Activated CD4-positive, alpha-beta memory T cell treated with anti-CD3 and anti-CD28 coated beads for 36 hours (primary cell): ENCODE measurements at regions of chr2 and their contacts with region 1.

Region 1: GRCh38 chr2:181197140-181197760 is 216.8 kb downstream of the UBE2E3 start:
- DNase-seq: no peak
- H3K4me3 Mint-ChIP-seq: peak overlapping the region; percentile 6
- H3K27ac Mint-ChIP-seq: peak overlapping the region; percentile 85
- H3K4me1 Mint-ChIP-seq: peaks cover 51% of the 10 kb centered on the region
- H3K27me3 Mint-ChIP-seq: no peaks in the 10 kb centered on the region

Region 2: DNA sequence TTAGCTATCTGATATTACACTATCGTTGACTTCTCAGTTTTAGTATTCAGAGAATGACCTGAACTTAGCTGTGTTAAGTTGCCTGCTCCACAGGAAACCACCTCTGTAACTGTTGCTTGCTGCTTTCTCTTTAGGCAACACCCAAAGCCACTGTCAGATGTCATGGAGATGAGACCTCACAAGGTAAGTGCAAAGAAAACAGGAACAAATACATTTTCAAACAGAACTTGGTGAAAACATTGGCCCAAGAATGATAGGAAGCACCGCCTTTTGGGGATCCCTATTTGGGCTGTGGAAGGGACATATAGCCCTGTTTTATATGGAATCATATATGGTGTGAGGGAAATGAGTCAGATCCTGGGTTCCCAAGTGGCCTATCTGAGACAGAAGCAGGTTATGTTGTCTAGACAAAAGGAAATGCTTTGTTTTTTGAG is 73.4 kb before region 1 on chr2:
- CTCF ChIA-PET with region 1: no interaction called
- POLR2A ChIA-PET with region 1: no interaction called
- intact Hi-C with region 1: loop called (anchors 2 kb)
- DNase-seq: peak; percentile 67
- H3K4me3 Mint-ChIP-seq: peak overlapping the region; percentile 74
- H3K27ac Mint-ChIP-seq: peak overlapping the region; percentile 92
- H3K4me1 Mint-ChIP-seq: peaks cover 60% of the 10 kb centered on the region
- H3K27me3 Mint-ChIP-seq: no peaks in the 10 kb centered on the region

Region 3: DNA sequence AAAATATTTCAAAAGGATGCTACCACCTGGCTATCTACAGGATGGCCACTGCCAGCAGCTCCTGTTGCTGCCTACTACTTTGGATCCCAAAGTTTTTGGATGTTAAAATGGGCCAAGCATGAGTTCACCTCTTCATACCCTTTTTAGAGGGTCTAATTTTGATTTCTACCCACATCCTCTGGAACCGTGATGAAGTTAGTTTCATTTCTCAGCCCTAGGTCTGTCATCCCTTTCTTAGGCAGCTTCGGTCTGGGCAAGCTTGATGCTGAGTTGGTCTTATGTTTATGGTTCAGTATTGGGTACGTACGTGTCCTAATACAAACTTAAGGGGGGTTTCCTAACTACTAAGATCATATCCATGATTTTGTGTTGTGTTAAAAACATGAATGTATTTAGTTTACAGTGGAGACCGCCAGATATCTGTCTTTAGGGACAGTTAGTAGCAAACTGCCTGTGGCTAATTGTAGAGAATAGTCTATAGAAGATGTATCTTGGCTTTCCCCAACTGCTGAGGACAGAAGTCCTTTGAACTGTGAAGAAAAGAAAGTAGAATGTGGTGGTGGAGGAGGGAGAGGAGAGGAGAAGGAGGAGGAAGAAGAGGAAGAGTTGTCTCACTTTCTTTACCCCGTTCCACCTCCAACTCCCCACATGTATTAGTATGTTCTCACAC is 31.9 kb before region 1 on chr2:
- CTCF ChIA-PET with region 1: interaction called, 3 read pairs
- POLR2A ChIA-PET with region 1: no interaction called
- intact Hi-C with region 1: loop called (anchors 2 kb)
- DNase-seq: peak; percentile 35
- H3K4me3 Mint-ChIP-seq: peak overlapping the region; percentile 59
- H3K27ac Mint-ChIP-seq: peak overlapping the region; percentile 90
- H3K4me1 Mint-ChIP-seq: peaks cover 59% of the 10 kb centered on the region
- H3K27me3 Mint-ChIP-seq: no peaks in the 10 kb centered on the region

Region 4: DNA sequence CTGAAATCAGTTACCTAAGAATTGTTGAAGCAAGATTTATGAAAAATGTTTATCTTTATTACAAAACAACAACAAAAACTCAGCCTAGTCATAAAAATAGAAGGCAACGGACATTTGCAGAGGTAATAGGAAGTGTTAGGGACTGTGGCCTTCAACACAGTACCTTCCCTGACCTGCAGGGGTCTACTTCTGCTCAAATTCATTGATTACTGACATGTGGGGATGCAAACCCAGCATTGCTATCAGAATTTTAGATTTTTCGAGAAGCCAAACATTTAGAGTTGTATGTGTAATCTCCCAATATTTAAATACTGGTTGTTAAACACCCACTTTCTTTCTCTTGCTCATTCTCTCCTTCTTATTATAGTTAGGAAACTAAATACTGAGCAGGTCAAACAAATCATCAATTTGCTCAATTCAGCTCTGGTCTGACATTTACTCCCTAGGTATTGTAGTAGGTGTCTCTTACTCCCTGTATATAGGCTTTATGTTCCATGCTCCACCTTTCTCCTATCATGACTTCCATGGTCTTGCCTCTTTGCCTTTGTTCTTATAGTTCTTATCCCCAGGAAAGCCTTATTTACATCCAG is 18.3 kb before region 1 on chr2:
- CTCF ChIA-PET with region 1: interaction called, 4 read pairs
- POLR2A ChIA-PET with region 1: no interaction called
- intact Hi-C with region 1: loop called (anchors 2 kb)
- DNase-seq: peak; percentile 55
- H3K4me3 Mint-ChIP-seq: no peak overlapping the region
- H3K27ac Mint-ChIP-seq: peak overlapping the region; percentile 73
- H3K4me1 Mint-ChIP-seq: peaks cover 46% of the 10 kb centered on the region
- H3K27me3 Mint-ChIP-seq: no peaks in the 10 kb centered on the region

Region 5: DNA sequence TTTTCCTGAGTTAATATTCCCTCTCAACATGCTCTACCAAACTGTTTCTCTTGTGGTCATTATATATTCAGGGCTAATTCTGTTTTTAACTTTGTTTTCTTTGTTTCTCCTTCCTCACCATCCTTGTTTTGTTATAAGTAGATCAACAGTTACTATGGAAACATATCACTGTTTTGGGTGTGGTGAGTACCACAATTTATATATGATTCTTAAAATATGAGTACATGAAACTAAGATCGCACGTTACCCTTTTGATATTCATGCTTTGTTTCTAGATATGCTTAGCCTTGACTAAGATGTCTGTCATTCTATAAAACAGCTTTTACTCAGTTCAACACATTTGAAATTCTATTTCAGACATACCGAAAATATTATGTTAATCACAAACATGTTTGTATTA is 27.6 kb after region 1 on chr2:
- CTCF ChIA-PET with region 1: no interaction called
- POLR2A ChIA-PET with region 1: no interaction called
- intact Hi-C with region 1: loop called (anchors 1 kb)
- DNase-seq: no peak
- H3K4me3 Mint-ChIP-seq: peak overlapping the region; percentile 59
- H3K27ac Mint-ChIP-seq: peak overlapping the region; percentile 87
- H3K4me1 Mint-ChIP-seq: peaks cover 24% of the 10 kb centered on the region
- H3K27me3 Mint-ChIP-seq: no peaks in the 10 kb centered on the region

Region 6: GRCh38 chr2:181275643-181276070 is 78.4 kb after region 1 on chr2:
- CTCF ChIA-PET with region 1: no interaction called
- POLR2A ChIA-PET with region 1: no interaction called
- intact Hi-C with region 1: loop called (anchors 2 kb)
- DNase-seq: peak; percentile 33
- H3K4me3 Mint-ChIP-seq: no peak overlapping the region
- H3K27ac Mint-ChIP-seq: peak overlapping the region; percentile 71
- H3K4me1 Mint-ChIP-seq: peaks cover 41% of the 10 kb centered on the region
- H3K27me3 Mint-ChIP-seq: no peaks in the 10 kb centered on the region